A549 (cell line): ENCODE measurements at regions of chr12 and their contacts with region 1.

Region 1: GRCh38 chr12:50038336-50038735 is 13.0 kb upstream of the RACGAP1 start:
- DNase-seq: no peak
- ATAC-seq: no peak
- H3K4me3 ChIP-seq: no peak overlapping the region
- H3K27ac ChIP-seq: no peak overlapping the region
- H3K4me1 ChIP-seq: no peaks in the 10 kb centered on the region
- CTCF ChIP-seq: no peak
- EP300 ChIP-seq: no peak
- POLR2A ChIP-seq: no peak
- RAD21 ChIP-seq: no peak

Region 2: GRCh38 chr12:49876070-49876469 is 162.3 kb before region 1 on chr12:
- CTCF ChIA-PET with region 1: no interaction called
- POLR2A ChIA-PET with region 1: no interaction called
- DNase-seq: no peak
- ATAC-seq: no peak
- H3K4me3 ChIP-seq: no peak overlapping the region
- H3K27ac ChIP-seq: no peak overlapping the region
- H3K4me1 ChIP-seq: no peaks in the 10 kb centered on the region
- CTCF ChIP-seq: no peak
- EP300 ChIP-seq: no peak
- POLR2A ChIP-seq: no peak
- RAD21 ChIP-seq: no peak

Region 3: DNA sequence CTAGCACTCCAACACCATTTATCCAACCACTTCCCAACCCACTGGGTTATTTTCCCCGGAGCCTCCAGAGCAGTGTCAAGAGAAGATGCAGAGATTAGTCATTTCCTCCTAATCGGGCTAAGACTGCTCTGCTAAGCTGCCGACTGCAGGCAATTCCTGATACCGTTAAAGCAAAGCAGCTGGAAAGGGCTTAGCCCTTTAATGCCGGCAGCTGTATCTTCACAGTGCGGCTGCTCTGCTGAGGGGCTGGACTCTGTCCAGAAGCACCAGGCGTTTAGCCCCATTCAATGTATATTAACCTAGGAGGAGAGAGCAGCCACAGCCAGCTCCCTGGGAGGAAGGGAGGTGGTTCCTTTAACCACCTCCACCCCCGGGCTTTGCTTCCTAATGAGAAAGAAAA is 54.4 kb before region 1 on chr12:
- CTCF ChIA-PET with region 1: interaction called, 12 read pairs
- POLR2A ChIA-PET with region 1: no interaction called
- DNase-seq: no peak
- ATAC-seq: peak; percentile 55 to 57; a peak in 3 of 6 replicates
- H3K4me3 ChIP-seq: no peak overlapping the region
- H3K27ac ChIP-seq: no peak overlapping the region
- H3K4me1 ChIP-seq: no peaks in the 10 kb centered on the region
- CTCF ChIP-seq: no peak
- EP300 ChIP-seq: no peak
- POLR2A ChIP-seq: no peak
- RAD21 ChIP-seq: no peak

Region 4: DNA sequence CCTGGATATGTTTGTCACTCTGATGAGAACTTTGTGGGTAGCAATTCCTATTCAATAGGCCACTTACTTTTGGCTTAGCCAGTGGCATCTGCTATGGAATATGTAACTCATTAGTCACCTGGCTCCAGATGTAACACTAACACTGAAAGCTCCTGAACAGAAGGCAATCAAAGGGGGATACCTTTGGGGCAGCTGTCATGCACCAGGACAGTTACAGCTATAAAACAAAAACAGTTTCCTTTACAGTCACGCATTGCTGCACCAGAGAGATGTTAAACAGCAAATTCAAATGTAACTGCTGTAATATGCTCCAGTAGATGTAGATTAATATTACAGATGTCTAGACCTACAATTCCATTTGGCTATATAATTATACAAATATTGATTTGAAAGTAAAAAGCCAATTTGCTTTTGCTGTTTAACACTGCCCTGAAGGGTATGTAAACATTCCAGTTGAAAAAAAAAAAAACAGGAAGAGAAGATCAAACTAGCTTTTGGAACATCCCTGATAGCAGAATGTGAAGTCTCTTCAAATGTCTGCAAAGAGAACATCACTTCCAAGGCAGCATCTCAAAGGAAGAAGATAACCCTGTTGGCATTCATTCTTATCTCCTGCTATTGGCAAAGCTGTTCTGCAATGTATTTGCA is 31.4 kb before region 1 on chr12:
- CTCF ChIA-PET with region 1: interaction called, 21 read pairs
- POLR2A ChIA-PET with region 1: interaction called, 3 read pairs
- DNase-seq: no peak
- ATAC-seq: no peak
- H3K4me3 ChIP-seq: no peak overlapping the region
- H3K27ac ChIP-seq: no peak overlapping the region
- H3K4me1 ChIP-seq: no peaks in the 10 kb centered on the region
- CTCF ChIP-seq: no peak
- EP300 ChIP-seq: no peak
- POLR2A ChIP-seq: no peak
- RAD21 ChIP-seq: no peak

Region 5: GRCh38 chr12:50016501-50017475 is 21.5 kb before region 1 on chr12:
- CTCF ChIA-PET with region 1: interaction called, 14 read pairs
- POLR2A ChIA-PET with region 1: no interaction called
- DNase-seq: no peak
- ATAC-seq: no peak
- H3K4me3 ChIP-seq: no peak overlapping the region
- H3K27ac ChIP-seq: no peak overlapping the region
- H3K4me1 ChIP-seq: peaks cover 7% of the 10 kb centered on the region; the same call in 2 of the 3 replicates
- CTCF ChIP-seq: no peak
- EP300 ChIP-seq: no peak
- POLR2A ChIP-seq: no peak
- RAD21 ChIP-seq: no peak